ENCODE measurements at regions of chr1 and their contacts with region 1.

Region 1: DNA sequence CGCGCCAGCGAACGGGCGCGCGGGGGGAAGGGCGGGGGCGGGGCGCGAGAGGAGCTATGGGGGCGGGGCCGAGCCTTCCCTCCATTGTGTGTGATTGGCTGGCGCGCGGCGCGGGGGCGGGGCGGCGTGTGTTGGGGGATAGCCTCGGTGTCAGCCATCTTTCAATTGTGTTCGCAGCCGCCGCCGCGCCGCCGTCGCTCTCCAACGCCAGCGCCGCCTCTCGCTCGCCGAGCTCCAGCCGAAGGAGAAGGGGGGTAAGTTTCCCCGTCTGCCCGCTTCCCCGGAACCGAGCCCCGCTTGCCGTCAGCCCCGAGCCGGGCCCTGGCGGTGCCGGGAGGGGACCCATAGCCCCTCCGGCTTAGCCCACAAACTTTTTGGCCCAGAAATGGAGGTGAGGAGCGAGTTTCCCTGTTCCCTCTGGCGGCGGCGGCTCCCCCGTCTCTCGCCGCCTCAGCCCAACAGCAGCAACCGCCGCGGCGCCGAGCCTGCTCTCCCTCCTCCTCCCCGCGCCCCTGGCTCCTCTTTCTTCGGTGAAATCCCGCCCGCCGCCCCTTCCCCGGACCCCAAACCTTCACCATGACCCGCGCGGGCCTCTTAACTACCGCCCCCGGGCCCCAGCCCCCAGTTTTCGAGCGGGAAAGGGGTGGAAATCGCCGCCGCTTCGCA is at the start of gene H3-3A:
- DNase-seq: peak; percentile 87
- ATAC-seq: peak; percentile 81
- H3K4me3 ChIP-seq: peak within 1 kb of the TSS; percentile 92 to 97 (median 95)
- H3K27ac ChIP-seq: peak within 1 kb of the TSS; percentile 99
- H3K4me1 ChIP-seq: peaks cover 39% of the 10 kb centered on the region
- H3K27me3 ChIP-seq: no peaks in the 10 kb centered on the region; a peak in 1 of 5 replicates
- CTCF ChIP-seq: peak; percentile 13; the same call in 1 of the 2 replicates
- EP300 ChIP-seq: no peak
- POLR2A ChIP-seq: peak; percentile 89 to 93
- RAD21 ChIP-seq: peak; percentile 39
- total RNA-seq, gene H3-3A: 221 and 312 TPM in 2 replicates

Region 2: GRCh38 chr1:225277445-225277844 is 785.2 kb before region 1 on chr1:
- CTCF ChIA-PET with region 1: no interaction called
- POLR2A ChIA-PET with region 1: no interaction called
- in situ Hi-C with region 1: no loop called
- intact Hi-C with region 1: no loop called
- DNase-seq: no peak
- ATAC-seq: no peak
- H3K4me3 ChIP-seq: no peak overlapping the region
- H3K27ac ChIP-seq: no peak overlapping the region
- H3K4me1 ChIP-seq: no peaks in the 10 kb centered on the region
- H3K27me3 ChIP-seq: no peaks in the 10 kb centered on the region; a peak in 1 of 5 replicates
- CTCF ChIP-seq: no peak
- EP300 ChIP-seq: no peak
- POLR2A ChIP-seq: no peak
- RAD21 ChIP-seq: no peak

Region 3: DNA sequence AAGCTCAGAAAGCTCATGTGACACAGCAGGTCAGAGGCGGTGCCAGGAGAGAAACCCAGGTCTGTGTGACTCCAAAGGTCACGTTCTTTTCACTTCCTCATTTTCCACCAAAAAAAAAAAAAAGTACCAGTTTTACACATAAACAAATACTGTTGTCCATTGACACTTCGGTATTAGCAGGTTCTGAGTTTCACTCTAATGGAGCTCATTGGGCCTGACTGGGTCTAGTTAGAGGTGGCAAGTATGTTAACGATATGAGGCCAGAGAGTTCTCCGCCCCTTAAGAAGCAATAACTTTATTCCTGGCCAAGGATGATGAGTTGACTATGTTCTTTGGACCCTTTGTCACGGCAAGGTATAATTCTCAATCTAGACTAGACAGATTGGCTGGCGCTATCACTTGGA is 33.6 kb before region 1 on chr1:
- CTCF ChIA-PET with region 1: no interaction called
- POLR2A ChIA-PET with region 1: interaction called, 38 read pairs
- in situ Hi-C with region 1: no loop called
- intact Hi-C with region 1: loop called (anchors 5 kb)
- DNase-seq: peak; percentile 63
- ATAC-seq: peak; percentile 77
- H3K4me3 ChIP-seq: peak overlapping the region in 2 of 3 experiments; percentile 5 to 6; a peak in 2 of 6 replicates
- H3K27ac ChIP-seq: no peak overlapping the region
- H3K4me1 ChIP-seq: peaks cover 27% of the 10 kb centered on the region
- H3K27me3 ChIP-seq: peaks cover 1 to 5% of the 10 kb centered on the region in 2 experiments; a peak in 1 of 5 replicates
- CTCF ChIP-seq: no peak
- EP300 ChIP-seq: no peak
- POLR2A ChIP-seq: no peak
- RAD21 ChIP-seq: no peak

Region 4: GRCh38 chr1:226051356-226051755 is 11.3 kb before region 1 on chr1:
- CTCF ChIA-PET with region 1: no interaction called
- POLR2A ChIA-PET with region 1: interaction called, 15 read pairs
- in situ Hi-C with region 1: no loop called
- intact Hi-C with region 1: no loop called
- DNase-seq: no peak
- ATAC-seq: no peak
- H3K4me3 ChIP-seq: no peak overlapping the region
- H3K27ac ChIP-seq: no peak overlapping the region
- H3K4me1 ChIP-seq: peaks cover 14% of the 10 kb centered on the region
- H3K27me3 ChIP-seq: no peaks in the 10 kb centered on the region
- CTCF ChIP-seq: no peak
- EP300 ChIP-seq: no peak
- POLR2A ChIP-seq: no peak
- RAD21 ChIP-seq: no peak

Region 5: GRCh38 chr1:226109829-226110248 is 47.1 kb after region 1 on chr1:
- CTCF ChIA-PET with region 1: no interaction called
- POLR2A ChIA-PET with region 1: interaction called, 22 read pairs
- in situ Hi-C with region 1: no loop called
- intact Hi-C with region 1: no loop called
- DNase-seq: peak; percentile 75
- ATAC-seq: peak; percentile 69
- H3K4me3 ChIP-seq: peak overlapping the region; percentile 65 to 77 (median 72)
- H3K27ac ChIP-seq: peak overlapping the region; percentile 26
- H3K4me1 ChIP-seq: peaks cover 34% of the 10 kb centered on the region
- H3K27me3 ChIP-seq: peaks cover 2 to 16% of the 10 kb centered on the region in 2 experiments; a peak in 4 of 5 replicates
- CTCF ChIP-seq: no peak
- EP300 ChIP-seq: no peak
- POLR2A ChIP-seq: no peak
- RAD21 ChIP-seq: no peak

Region 6: DNA sequence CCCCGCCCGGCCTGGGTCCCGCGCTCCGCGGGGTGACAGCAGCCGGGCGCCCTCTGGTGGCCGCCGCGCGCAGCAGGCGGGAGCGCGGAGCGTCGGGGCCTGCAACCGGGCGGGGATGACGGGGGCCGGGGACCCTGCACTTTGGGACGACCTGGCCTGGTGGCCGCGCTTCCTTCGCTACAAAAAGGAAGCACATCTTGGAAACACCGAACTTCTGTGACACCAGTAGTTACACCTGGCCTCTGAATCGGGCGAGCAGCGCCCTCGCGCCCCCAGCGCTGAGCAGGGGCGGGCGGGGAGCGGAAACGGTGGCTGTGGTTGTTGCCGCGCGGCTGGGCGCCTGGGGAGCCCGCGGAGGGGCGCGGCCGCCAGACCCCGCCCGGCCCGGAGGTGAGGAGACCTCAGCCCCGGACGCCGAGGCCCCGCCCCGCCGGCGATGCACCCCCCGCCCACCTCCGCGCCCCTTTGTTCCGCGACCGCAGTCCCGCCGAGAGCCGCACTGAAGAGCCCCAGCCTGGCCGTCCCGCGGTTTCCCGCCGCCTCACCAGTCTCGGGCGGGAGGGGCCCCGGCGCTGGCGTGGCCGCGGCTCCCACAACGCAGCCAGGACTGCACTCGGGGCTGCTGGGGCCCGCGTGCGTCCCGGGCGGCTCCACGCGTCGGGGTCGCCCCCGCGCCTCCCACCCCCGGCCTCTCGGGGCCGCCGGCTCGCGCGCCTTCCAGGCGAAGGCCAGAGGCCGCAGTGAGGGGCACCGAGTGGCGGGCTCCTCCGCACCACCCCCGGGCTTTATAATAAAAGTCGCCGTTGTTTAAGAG is 59.1 kb after region 1 on chr1:
- CTCF ChIA-PET with region 1: interaction called, 32 read pairs
- POLR2A ChIA-PET with region 1: interaction called, 18 read pairs
- in situ Hi-C with region 1: no loop called
- intact Hi-C with region 1: loop called (anchors 2 kb)
- DNase-seq: peak; percentile 49
- ATAC-seq: peak; percentile 69
- H3K4me3 ChIP-seq: peak overlapping the region; percentile 49 to 81 (median 78); a peak in 5 of 6 replicates
- H3K27ac ChIP-seq: peak overlapping the region; percentile 88
- H3K4me1 ChIP-seq: peaks cover 51% of the 10 kb centered on the region
- H3K27me3 ChIP-seq: peaks cover 2 to 41% of the 10 kb centered on the region in 2 experiments; a peak in 4 of 5 replicates
- CTCF ChIP-seq: peak; percentile 78
- EP300 ChIP-seq: no peak
- POLR2A ChIP-seq: peak; percentile 45 to 56; a peak in 2 of 4 replicates
- RAD21 ChIP-seq: peak; percentile 91

Region 7: GRCh38 chr1:226201029-226201593 is 138.4 kb after region 1 on chr1:
- CTCF ChIA-PET with region 1: no interaction called
- POLR2A ChIA-PET with region 1: no interaction called
- in situ Hi-C with region 1: no loop called
- intact Hi-C with region 1: no loop called
- DNase-seq: no peak
- ATAC-seq: peak; percentile 77
- H3K4me3 ChIP-seq: no peak overlapping the region
- H3K27ac ChIP-seq: no peak overlapping the region
- H3K4me1 ChIP-seq: peaks cover 6% of the 10 kb centered on the region; the same call in 1 of the 2 replicates
- H3K27me3 ChIP-seq: no peaks in the 10 kb centered on the region
- CTCF ChIP-seq: peak; percentile 76
- EP300 ChIP-seq: no peak
- POLR2A ChIP-seq: no peak
- RAD21 ChIP-seq: no peak